A549 (cell line): ENCODE measurements at regions of chr1 and their contacts with region 1.

Region 1: GRCh38 chr1:84753516-84754385 is 63.5 kb upstream of the SSX2IP start:
- DNase-seq: peak; percentile 47 to 66
- ATAC-seq: peak; percentile 86 to 95
- H3K4me3 ChIP-seq: no peak overlapping the region
- H3K27ac ChIP-seq: no peak overlapping the region
- H3K4me1 ChIP-seq: no peaks in the 10 kb centered on the region
- CTCF ChIP-seq: peak; percentile 81
- EP300 ChIP-seq: no peak
- POLR2A ChIP-seq: no peak
- RAD21 ChIP-seq: peak; percentile 92 to 96

Region 2: GRCh38 chr1:84442256-84442655 is 311.5 kb before region 1 on chr1:
- CTCF ChIA-PET with region 1: interaction called, 31 read pairs
- POLR2A ChIA-PET with region 1: no interaction called
- DNase-seq: peak; percentile 16 to 66
- ATAC-seq: peak in 1 of 2 experiments; percentile 81; a peak in 4 of 6 replicates
- H3K4me3 ChIP-seq: no peak overlapping the region
- H3K27ac ChIP-seq: no peak overlapping the region
- H3K4me1 ChIP-seq: no peaks in the 10 kb centered on the region
- CTCF ChIP-seq: peak; percentile 52
- EP300 ChIP-seq: no peak
- POLR2A ChIP-seq: no peak
- RAD21 ChIP-seq: peak; percentile 64 to 72

Region 3: GRCh38 chr1:84712276-84712874 is 41.4 kb before region 1 on chr1:
- CTCF ChIA-PET with region 1: no interaction called
- POLR2A ChIA-PET with region 1: no interaction called
- DNase-seq: no peak
- ATAC-seq: no peak
- H3K4me3 ChIP-seq: no peak overlapping the region
- H3K27ac ChIP-seq: no peak overlapping the region
- H3K4me1 ChIP-seq: no peaks in the 10 kb centered on the region
- CTCF ChIP-seq: no peak
- EP300 ChIP-seq: no peak
- POLR2A ChIP-seq: no peak
- RAD21 ChIP-seq: no peak

Region 4: GRCh38 chr1:84742653-84743052 is 11.1 kb before region 1 on chr1:
- CTCF ChIA-PET with region 1: interaction called, 10 read pairs
- POLR2A ChIA-PET with region 1: no interaction called
- DNase-seq: no peak
- ATAC-seq: no peak
- H3K4me3 ChIP-seq: no peak overlapping the region
- H3K27ac ChIP-seq: no peak overlapping the region
- H3K4me1 ChIP-seq: no peaks in the 10 kb centered on the region
- CTCF ChIP-seq: no peak
- EP300 ChIP-seq: no peak
- POLR2A ChIP-seq: no peak
- RAD21 ChIP-seq: no peak

Region 5: DNA sequence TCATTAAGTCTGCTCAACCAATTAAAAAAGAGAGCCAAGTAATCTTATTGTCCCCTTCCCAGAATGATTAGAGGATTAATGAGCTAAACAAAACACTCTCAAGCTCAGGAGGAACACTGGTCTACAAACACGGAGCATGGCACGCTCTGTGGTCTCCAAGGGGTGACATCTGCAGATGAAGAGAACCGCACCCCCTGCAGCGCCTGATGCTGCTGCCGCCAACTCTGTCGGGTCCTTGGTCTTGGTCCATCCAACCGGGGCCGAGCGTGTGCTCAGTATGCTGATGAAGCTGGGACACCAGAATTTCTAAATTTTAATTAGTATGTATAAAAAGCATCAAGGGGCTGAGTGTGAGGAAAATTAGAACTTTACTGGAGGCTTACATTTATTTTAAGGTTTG is 56.6 kb after region 1 on chr1:
- CTCF ChIA-PET with region 1: no interaction called
- POLR2A ChIA-PET with region 1: no interaction called
- DNase-seq: no peak
- ATAC-seq: no peak
- H3K4me3 ChIP-seq: no peak overlapping the region
- H3K27ac ChIP-seq: no peak overlapping the region
- H3K4me1 ChIP-seq: no peaks in the 10 kb centered on the region
- CTCF ChIP-seq: no peak
- EP300 ChIP-seq: no peak
- POLR2A ChIP-seq: no peak
- RAD21 ChIP-seq: no peak